ENCODE measurements at regions of chr19 and their contacts with region 1.

Region 1: DNA sequence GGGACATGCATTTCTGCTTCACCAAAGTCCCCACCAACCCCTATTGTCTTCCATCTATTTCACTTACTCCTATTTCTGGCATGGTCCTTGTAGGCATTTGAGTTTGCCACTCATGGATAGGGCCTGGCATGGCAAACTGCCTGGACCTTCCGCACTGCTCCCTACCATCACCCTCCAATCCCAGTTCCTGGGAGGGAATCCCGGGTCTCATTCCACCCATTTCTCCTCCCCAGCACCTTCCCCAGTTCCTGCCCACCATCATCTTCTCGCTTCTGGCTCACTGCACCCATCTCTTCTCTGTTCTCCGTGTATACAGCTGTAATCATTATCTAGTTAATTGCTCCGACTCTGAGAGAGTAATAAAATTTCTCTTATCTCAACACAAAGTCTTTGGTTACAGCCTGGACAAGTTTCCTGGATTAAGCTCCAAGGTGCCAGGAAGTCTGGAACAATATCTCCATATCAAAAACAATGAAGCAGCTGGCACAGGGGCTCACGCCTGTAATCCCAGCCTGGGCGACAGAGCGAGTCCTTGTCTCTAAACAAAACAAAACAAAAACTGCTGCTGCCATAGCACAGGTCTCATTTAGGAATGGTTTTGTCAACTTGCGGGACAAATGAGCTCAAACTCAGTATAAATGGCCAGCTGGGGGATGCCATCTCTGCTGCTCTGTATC is 17.0 kb upstream of the COX7A1 start:
- DNase-seq: no peak
- ATAC-seq: no peak

Region 2: DNA sequence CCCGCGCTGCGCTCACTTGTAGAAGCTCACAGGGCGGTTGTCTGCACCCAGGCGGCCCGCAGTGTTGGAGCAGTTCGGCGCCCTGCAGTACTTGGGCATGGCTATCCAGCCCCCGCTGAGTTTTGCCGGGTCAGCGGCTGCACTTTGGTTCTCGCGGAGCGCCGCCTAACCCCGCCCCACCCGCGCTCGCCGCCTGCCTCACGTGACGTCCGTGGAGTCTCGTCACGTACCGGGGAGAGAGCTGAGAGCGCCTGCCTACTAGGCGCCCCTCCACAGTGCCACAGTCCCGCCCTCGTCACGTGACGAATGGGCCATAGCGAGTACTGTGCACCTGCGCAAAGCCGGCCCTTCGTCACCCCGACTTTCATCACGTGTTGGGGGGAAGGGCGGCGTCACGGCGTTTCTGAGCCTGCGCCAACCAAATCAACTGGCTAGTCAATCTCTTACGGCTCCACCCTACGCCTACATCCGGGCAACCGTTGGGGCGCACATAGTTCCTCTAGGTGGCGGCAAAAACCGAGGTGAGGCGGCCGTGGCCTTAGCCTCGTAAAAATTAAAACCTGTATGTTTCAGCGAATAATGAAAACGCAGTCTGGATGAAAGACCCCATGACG is 115.0 kb before region 1 on chr19 and contains the start of gene THAP8:
- intact Hi-C with region 1: loop called (anchors 10 kb)
- DNase-seq: peak; percentile 100
- ATAC-seq: peak; percentile 97
- total RNA-seq, gene THAP8: 10.5 TPM

Region 3: DNA sequence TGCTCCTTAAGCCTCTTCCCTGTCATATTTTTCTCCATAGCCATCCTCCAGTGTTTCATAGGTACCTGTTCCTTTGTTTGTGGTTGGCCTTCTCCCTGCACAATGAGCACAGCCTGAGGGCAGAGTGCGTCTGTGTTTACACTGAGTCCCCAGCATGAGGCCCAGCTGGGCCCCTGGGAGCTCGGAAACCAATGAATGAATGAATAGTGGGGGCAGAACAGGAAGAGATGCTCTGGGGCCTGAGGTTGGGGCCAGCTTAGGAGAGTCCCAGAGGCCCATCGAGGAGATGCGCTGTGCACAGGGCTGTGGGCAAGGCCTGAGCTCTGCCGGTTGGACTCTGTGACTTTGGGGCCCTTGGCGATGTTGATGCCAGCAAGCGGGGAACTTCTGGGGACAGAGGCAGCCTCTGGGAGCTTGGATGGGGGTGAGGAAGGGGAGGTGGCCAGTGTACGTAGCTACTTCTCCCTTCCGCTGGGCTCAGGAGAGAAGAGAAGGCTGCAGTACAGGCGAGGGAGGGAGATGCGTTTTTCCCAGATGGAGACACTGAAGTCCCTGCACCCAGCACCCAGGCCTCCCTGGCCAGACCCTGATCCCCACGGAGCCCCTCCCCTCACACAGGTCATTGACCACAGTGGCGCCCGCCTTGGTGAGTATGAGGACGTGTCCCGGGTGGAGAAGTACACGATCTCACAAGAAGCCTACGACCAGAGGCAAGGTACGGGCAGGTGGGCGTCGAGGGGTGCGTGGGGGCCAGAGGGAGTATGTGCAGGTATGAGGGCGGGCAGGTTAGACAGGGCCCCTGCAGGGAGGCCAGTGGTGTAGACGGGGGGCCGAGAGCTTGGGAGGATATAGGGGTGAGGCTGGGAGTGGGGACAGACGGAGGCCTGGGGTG is 48.9 kb before region 1 on chr19:
- intact Hi-C with region 1: loop called (anchors 5 kb)
- DNase-seq: no peak
- ATAC-seq: no peak